ENCODE measurements at regions of chr10 and their contacts with region 1.

Region 1: GRCh38 chr10:64733980-64734379 is 1212.8 kb downstream of the REEP3 start:
- DNase-seq: peak; percentile 49 to 73
- H3K4me3 ChIP-seq: no peak overlapping the region
- H3K4me3 Mint-ChIP-seq: no peak overlapping the region
- H3K27ac Mint-ChIP-seq: no peak overlapping the region
- H3K4me1 ChIP-seq: peaks cover 19% of the 10 kb centered on the region
- H3K4me1 Mint-ChIP-seq: peaks cover 11% of the 10 kb centered on the region
- H3K27me3 ChIP-seq: no peaks in the 10 kb centered on the region
- H3K27me3 Mint-ChIP-seq: no peaks in the 10 kb centered on the region
- CTCF ChIP-seq: peak; percentile 73 to 77

Region 2: GRCh38 chr10:64091897-64092296 is 642.1 kb before region 1 on chr10:
- CTCF ChIA-PET with region 1: no interaction called
- POLR2A ChIA-PET with region 1: no interaction called
- intact Hi-C with region 1: loop called (anchors 5 kb)
- DNase-seq: peak; percentile 48 to 53
- H3K4me3 ChIP-seq: no peak overlapping the region
- H3K4me3 Mint-ChIP-seq: no peak overlapping the region
- H3K27ac Mint-ChIP-seq: no peak overlapping the region
- H3K4me1 ChIP-seq: no peaks in the 10 kb centered on the region
- H3K4me1 Mint-ChIP-seq: no peaks in the 10 kb centered on the region
- H3K27me3 ChIP-seq: no peaks in the 10 kb centered on the region
- H3K27me3 Mint-ChIP-seq: no peaks in the 10 kb centered on the region
- CTCF ChIP-seq: peak; percentile 61 to 66

Region 3: DNA sequence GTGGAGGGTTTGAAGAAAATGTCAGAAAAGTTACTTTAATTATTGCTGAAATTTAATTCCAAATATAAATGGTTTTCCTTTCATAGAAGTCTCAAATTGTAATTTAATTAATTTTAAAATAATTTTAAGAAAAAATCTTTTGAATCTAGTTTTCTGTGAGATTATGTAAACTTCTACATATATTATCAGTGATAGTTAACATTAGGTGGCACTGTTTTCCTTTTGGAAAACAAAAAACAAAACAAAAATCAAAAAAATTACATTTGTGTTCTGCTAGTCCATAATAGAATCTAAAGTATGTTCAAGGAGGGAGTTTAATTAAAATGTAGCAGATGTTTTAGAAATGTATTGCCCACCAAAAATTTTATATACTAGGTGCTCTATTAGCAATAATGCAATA is 243.9 kb after region 1 on chr10:
- CTCF ChIA-PET with region 1: no interaction called
- POLR2A ChIA-PET with region 1: no interaction called
- intact Hi-C with region 1: loop called (anchors 5 kb)
- DNase-seq: no peak
- H3K4me3 ChIP-seq: no peak overlapping the region
- H3K4me3 Mint-ChIP-seq: no peak overlapping the region
- H3K27ac Mint-ChIP-seq: no peak overlapping the region
- H3K4me1 ChIP-seq: no peaks in the 10 kb centered on the region
- H3K4me1 Mint-ChIP-seq: no peaks in the 10 kb centered on the region
- H3K27me3 ChIP-seq: no peaks in the 10 kb centered on the region
- H3K27me3 Mint-ChIP-seq: no peaks in the 10 kb centered on the region
- CTCF ChIP-seq: peak in 1 of 2 experiments; percentile 25

Region 4: GRCh38 chr10:65235846-65236245 is 501.9 kb after region 1 on chr10:
- CTCF ChIA-PET with region 1: no interaction called
- POLR2A ChIA-PET with region 1: no interaction called
- intact Hi-C with region 1: loop called (anchors 5 kb)
- DNase-seq: no peak
- H3K4me3 ChIP-seq: no peak overlapping the region
- H3K4me3 Mint-ChIP-seq: no peak overlapping the region
- H3K27ac Mint-ChIP-seq: no peak overlapping the region
- H3K4me1 ChIP-seq: no peaks in the 10 kb centered on the region
- H3K4me1 Mint-ChIP-seq: no peaks in the 10 kb centered on the region
- H3K27me3 ChIP-seq: no peaks in the 10 kb centered on the region
- H3K27me3 Mint-ChIP-seq: no peaks in the 10 kb centered on the region
- CTCF ChIP-seq: no peak

Region 5: DNA sequence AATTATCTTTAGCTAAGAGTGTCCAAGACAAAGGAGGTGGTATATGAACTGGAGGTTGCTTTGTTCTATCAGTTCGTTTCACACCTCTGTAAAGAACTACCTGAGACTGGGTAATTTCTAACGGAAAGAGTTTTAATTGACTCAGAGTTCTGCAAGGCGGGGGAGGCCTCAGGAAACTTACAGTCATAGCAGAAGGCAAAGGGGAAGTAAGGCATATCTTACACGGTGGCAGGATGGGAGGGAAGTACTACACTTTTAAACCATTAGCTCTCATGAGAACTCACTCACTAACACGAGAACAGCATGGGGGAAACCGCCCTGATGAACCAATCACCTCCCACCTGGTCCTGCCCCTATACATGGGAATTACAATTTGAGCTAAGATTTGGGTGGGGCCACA is 989.5 kb after region 1 on chr10:
- CTCF ChIA-PET with region 1: no interaction called
- POLR2A ChIA-PET with region 1: no interaction called
- intact Hi-C with region 1: loop called (anchors 10 kb)
- DNase-seq: no peak
- H3K4me3 ChIP-seq: no peak overlapping the region
- H3K4me3 Mint-ChIP-seq: no peak overlapping the region
- H3K27ac Mint-ChIP-seq: no peak overlapping the region
- H3K4me1 ChIP-seq: no peaks in the 10 kb centered on the region
- H3K4me1 Mint-ChIP-seq: no peaks in the 10 kb centered on the region
- H3K27me3 ChIP-seq: no peaks in the 10 kb centered on the region
- H3K27me3 Mint-ChIP-seq: no peaks in the 10 kb centered on the region
- CTCF ChIP-seq: no peak

Region 6: DNA sequence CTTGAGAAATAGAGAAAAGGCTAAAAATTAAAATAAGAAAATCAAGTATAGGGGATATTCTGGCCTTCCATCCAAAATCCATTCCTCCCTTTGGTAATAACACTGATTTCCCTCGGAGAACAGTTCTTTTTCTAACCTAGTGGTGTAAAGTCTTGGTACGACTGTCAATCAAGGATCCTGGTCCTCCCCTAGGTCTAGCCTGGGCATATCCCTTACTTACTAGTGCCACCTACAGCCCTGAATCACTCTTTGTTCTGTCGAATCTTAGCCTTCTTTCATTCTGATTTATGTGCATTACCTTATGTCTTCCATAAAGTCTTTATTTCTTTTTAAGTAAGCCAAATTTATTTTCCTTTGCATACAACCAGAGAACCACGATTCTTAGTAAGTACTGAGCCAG is 1893.2 kb after region 1 on chr10:
- CTCF ChIA-PET with region 1: no interaction called
- POLR2A ChIA-PET with region 1: no interaction called
- intact Hi-C with region 1: loop called (anchors 5 kb)
- DNase-seq: peak in 1 of 2 experiments; percentile 59
- H3K4me3 ChIP-seq: no peak overlapping the region
- H3K4me3 Mint-ChIP-seq: no peak overlapping the region
- H3K27ac Mint-ChIP-seq: no peak overlapping the region
- H3K4me1 ChIP-seq: no peaks in the 10 kb centered on the region
- H3K4me1 Mint-ChIP-seq: no peaks in the 10 kb centered on the region
- H3K27me3 ChIP-seq: no peaks in the 10 kb centered on the region
- H3K27me3 Mint-ChIP-seq: peaks cover 4% of the 10 kb centered on the region
- CTCF ChIP-seq: peak; percentile 34 to 40